ENCODE measurements at regions of chr18 and their contacts with region 1.

Region 1: GRCh38 chr18:74493689-74494088 is 2.5 kb upstream of the CNDP2 start:
- DNase-seq: peak in 3 of 6 donors; percentile 59 to 64 (median 60)
- ATAC-seq: peak in 2 of 4 donors; percentile 16 to 19
- H3K4me3 ChIP-seq: no peak overlapping the region
- H3K27ac ChIP-seq: no peak overlapping the region
- H3K4me1 ChIP-seq: peaks cover 15 to 17% (median 15%) of the 10 kb centered on the region in 3 donors
- H3K27me3 ChIP-seq: no peaks in the 10 kb centered on the region
- CTCF ChIP-seq: peak; percentile 11 to 55 (median 53)

Region 2: DNA sequence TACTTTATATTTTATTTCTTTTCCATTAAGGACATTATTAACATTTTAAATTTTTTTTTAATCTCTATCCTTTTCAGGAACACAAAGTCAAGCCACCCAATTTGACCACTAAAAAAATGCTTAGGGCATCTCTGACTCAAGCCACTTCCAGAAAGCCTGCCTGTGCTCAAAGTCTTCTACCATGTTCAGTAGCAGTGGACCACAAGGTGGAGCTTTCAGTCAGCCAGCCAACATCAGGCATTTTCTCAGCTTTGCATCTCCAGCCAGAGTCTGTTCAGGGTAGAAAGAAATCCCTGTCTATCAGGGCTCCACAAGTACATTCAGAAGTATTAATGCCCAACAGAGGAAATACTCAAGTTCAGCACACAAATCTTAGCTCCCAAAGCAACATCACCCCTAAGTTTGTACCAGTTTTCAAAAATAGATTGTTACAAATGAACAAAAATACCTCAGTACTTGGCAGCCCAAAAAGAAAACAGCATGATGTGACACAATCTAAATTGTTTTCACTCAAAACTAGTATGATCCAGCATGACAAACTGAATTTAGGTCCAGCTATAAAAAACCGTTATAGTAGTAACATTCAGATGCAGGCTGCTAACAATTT is 140.4 kb before region 1 on chr18:
- intact Hi-C with region 1: loop called (anchors 5 to 10 kb)
- DNase-seq: peak in 4 of 6 donors; percentile 30 to 71 (median 56)
- ATAC-seq: peak; percentile 75 to 98 (median 97)
- H3K4me3 ChIP-seq: no peak overlapping the region
- H3K27ac ChIP-seq: no peak overlapping the region
- H3K4me1 ChIP-seq: no peaks in the 10 kb centered on the region
- H3K27me3 ChIP-seq: no peaks in the 10 kb centered on the region
- CTCF ChIP-seq: peak; percentile 19 to 65 (median 52)